ENCODE measurements at regions of chr14 and their contacts with region 1.

Region 1: GRCh38 chr14:50532502-50533240 is at the start of gene MAP4K5:
- DNase-seq: peak; percentile 96
- ATAC-seq: peak; percentile 82
- H3K4me3 ChIP-seq: peak within 1 kb of the TSS; percentile 82
- H3K27ac ChIP-seq: peak within 1 kb of the TSS; percentile 72
- H3K4me1 ChIP-seq: peaks cover 47% of the 10 kb centered on the region
- H3K27me3 ChIP-seq: no peaks in the 10 kb centered on the region
- CTCF ChIP-seq: peak; percentile 94
- total RNA-seq, gene MAP4K5: 111 and 120 TPM in 2 replicates

Region 2: DNA sequence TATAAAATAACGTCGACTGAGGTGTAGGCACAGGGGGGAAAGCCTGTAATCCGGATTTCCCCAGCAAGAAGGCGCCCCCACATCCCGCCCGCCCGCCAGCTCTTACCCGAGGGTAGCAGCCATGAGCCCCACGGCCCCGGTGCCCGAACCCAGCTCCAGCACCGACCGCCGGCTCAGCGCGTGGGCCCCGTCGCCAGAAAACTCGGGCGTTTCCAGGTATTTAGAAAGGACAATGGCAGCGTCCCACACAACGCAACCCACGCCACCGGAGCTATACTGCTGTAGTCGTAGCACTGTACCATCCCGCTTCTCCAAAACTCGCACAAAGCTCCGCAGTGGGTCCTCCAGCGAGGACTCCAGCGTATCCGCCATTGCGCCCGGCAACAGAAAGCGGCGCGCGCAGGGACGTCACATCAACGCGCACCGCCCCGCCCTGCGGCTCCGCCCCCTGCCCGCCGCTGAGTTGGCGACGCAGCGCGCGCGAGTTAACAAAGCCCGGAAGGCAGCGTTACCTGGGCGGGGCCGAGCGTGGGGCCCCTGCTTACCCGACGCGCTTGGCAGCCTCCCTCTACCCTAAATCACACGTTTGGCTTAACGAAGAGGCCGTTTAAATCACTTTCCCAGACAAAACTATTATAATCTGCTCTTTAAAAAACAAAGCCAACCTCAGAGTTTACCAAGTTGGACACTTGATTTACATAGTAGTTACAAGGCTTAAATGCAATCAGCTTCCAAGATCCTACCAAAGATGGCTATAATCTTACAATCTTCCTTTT is 416.3 kb before region 1 on chr14 and contains the start of gene VCPKMT:
- CTCF ChIA-PET with region 1: no interaction called
- POLR2A ChIA-PET with region 1: no interaction called
- intact Hi-C with region 1: loop called (anchors 2 kb)
- DNase-seq: peak; percentile 96
- ATAC-seq: peak; percentile 99
- H3K4me3 ChIP-seq: peak within 1 kb of the TSS; percentile 91
- H3K27ac ChIP-seq: peak within 1 kb of the TSS; percentile 67
- H3K4me1 ChIP-seq: peaks cover 23% of the 10 kb centered on the region
- H3K27me3 ChIP-seq: no peaks in the 10 kb centered on the region
- CTCF ChIP-seq: no peak
- total RNA-seq, gene VCPKMT: 8.2 and 8.8 TPM in 2 replicates

Region 3: DNA sequence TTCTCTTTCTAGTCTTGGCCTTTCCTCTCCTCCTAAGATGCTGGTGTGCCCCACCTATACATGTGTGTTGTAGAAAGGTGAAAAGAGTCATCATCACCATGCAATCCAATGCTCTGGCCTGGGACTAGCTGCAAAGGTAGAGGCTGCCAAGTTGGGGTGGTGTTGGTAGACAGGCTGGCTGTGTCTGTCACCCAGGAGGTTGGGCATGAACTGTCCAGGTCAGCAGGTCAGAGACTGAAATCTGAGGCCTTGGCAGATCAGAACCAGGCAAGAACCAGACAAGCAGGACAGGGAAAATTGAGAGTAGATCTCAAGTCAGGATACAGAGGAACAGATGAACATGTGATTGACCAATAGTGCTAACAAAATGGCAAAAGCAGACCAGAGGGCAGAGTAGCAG is 246.8 kb before region 1 on chr14:
- CTCF ChIA-PET with region 1: no interaction called
- POLR2A ChIA-PET with region 1: no interaction called
- intact Hi-C with region 1: no loop called
- DNase-seq: no peak
- ATAC-seq: no peak
- H3K4me3 ChIP-seq: no peak overlapping the region
- H3K27ac ChIP-seq: no peak overlapping the region
- H3K4me1 ChIP-seq: no peaks in the 10 kb centered on the region
- H3K27me3 ChIP-seq: no peaks in the 10 kb centered on the region
- CTCF ChIP-seq: no peak

Region 4: DNA sequence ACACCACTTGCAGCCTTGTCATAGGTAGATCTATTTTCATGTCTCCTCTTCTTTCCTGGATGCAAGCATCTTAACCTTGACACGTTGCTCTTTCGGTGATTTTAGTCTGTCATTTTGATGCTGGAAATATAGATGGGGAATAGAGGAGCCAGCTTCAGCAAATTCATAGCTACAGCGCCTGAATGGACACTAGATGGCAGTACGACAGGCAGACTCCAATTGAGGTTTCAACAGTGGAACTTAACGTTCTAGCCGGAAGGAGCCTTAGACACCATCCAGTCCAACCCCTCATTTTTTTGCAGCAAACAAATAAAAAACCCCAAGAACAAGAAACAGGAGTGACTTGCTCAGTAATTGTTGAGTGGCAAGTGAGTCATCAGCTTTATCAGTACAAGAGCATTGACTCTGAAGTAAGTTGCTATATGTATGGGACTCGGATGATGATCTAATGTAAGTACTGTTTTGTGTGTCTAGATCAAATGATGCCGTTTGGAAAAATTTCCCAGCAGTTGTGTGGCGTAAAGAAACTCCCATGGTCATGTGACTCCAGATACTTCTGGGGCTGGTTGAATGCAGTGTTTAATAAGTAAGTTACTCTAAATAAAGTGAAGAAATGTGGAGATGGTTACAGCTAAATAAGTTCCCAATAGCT is 211.5 kb before region 1 on chr14:
- CTCF ChIA-PET with region 1: interaction called, 9 read pairs
- POLR2A ChIA-PET with region 1: interaction called, 3 read pairs
- intact Hi-C with region 1: loop called (anchors 1 kb)
- DNase-seq: peak; percentile 97
- ATAC-seq: peak; percentile 96
- H3K4me3 ChIP-seq: peak overlapping the region; percentile 25; the same call in 1 of the 2 replicates
- H3K27ac ChIP-seq: peak overlapping the region; percentile 87
- H3K4me1 ChIP-seq: peaks cover 22% of the 10 kb centered on the region
- H3K27me3 ChIP-seq: no peaks in the 10 kb centered on the region
- CTCF ChIP-seq: peak; percentile 98

Region 5: GRCh38 chr14:50396631-50397390 is 135.9 kb before region 1 on chr14 and contains the start of gene CDKL1:
- CTCF ChIA-PET with region 1: no interaction called
- POLR2A ChIA-PET with region 1: no interaction called
- intact Hi-C with region 1: loop called (anchors 2 kb)
- DNase-seq: peak; percentile 85
- ATAC-seq: peak; percentile 82
- H3K4me3 ChIP-seq: peak within 1 kb of the TSS; percentile 82
- H3K27ac ChIP-seq: peak within 1 kb of the TSS; percentile 85
- H3K4me1 ChIP-seq: peaks cover 34% of the 10 kb centered on the region
- H3K27me3 ChIP-seq: no peaks in the 10 kb centered on the region
- CTCF ChIP-seq: no peak
- total RNA-seq, gene CDKL1: 7.1 and 14.4 TPM in 2 replicates

Region 6: GRCh38 chr14:50452979-50453705 is 79.5 kb before region 1 on chr14:
- CTCF ChIA-PET with region 1: interaction called, 9 read pairs
- POLR2A ChIA-PET with region 1: interaction called, 8 read pairs
- intact Hi-C with region 1: loop called (anchors 1 kb)
- DNase-seq: peak; percentile 80
- ATAC-seq: peak; percentile 82
- H3K4me3 ChIP-seq: 0 out of 2 replicates have a peak overlapping the region, but pooled peaks have one; percentile 10
- H3K27ac ChIP-seq: peak overlapping the region; percentile 94
- H3K4me1 ChIP-seq: peaks cover 31% of the 10 kb centered on the region
- H3K27me3 ChIP-seq: no peaks in the 10 kb centered on the region
- CTCF ChIP-seq: no peak

Region 7: DNA sequence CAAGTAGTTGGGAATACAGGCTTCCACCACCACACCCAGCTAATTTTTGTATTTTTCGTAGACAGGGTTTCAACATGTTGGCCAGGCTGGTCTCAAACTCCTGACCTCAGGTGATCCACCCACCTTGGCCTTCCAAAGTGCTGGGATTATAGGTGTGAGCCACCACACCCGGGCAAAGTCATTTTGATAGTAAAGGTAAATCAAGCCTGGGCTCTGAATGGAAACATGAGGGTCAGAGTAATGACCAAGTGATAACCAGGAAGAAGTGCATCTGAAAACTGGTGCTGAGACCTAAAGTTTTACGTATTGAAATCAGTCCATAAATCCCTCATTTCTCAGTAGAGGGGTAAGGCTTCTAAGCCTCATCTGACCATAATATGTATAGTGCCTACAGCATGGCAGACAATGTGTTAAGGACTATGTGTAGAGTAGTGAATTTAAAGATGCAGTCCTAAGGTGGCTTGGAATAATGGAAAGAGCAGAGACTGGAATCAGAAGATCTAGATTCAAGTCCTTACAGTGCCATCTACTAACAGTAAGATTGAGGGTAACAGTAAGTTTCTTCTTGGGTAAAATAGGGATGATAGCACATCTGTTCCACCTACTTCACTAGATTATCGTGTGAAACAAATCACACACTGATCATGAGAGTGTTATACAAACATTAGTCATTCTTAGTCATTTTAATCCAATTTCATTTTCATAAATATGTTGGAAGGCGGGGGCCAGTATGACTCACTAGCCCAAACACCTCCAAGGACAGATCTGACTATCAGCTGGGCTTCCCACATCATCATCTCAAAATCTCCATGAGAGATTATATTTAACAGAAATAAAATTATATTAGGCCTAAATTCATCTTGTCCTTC is 11.5 kb before region 1 on chr14:
- CTCF ChIA-PET with region 1: no interaction called
- POLR2A ChIA-PET with region 1: no interaction called
- intact Hi-C with region 1: loop called (anchors 1 kb)
- DNase-seq: peak; percentile 93
- ATAC-seq: peak; percentile 92
- H3K4me3 ChIP-seq: 0 out of 2 replicates have a peak overlapping the region, but pooled peaks have one; percentile 2
- H3K27ac ChIP-seq: peak overlapping the region; percentile 88
- H3K4me1 ChIP-seq: peaks cover 32% of the 10 kb centered on the region
- H3K27me3 ChIP-seq: no peaks in the 10 kb centered on the region
- CTCF ChIP-seq: no peak

Measured in PC-3 (cell line).